Activated B cell treated with CpG ODN at 0.5 μM for 24 hours (primary cell): ENCODE measurements at regions of chr16 and their contacts with region 1.

Region 1: DNA sequence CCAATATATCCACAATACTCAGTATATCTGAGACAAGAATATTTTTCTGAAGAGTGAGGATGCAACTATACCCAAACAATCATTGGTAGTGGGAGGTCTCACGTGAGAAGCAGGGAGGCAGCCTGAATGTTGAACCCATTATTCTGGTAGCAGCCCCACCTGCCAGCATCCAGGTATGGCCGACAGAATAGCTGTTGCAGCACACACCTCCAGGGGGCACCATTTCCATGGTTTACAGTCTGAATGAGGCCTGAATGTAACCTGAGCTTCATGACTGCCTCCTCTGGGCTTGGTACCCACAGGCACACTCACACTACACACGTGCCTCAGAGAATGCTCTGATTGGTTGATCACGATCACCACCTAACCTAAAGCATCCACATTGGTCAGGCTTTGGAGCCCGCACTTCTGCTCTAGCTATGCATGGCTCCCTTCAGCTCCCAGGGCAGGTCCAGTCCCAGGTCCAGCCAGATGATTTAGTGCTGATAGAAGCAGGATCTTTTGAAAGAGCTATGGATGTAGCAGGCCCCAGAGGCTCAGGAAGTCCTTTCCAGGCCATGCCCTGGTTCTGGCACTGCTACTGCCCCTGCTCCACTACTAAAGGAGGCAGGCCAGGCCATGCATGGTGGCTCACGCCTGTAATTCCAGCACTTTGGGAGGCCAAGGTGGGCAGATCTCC is 11.0 kb upstream of the CBFB start:
- DNase-seq: peak; percentile 41
- ATAC-seq: peak; percentile 80
- H3K4me3 Mint-ChIP-seq: no peak overlapping the region
- H3K27ac Mint-ChIP-seq: no peak overlapping the region
- H3K4me1 Mint-ChIP-seq: peaks cover 4% of the 10 kb centered on the region
- H3K27me3 Mint-ChIP-seq: no peaks in the 10 kb centered on the region
- CTCF ChIP-seq: no peak

Region 2: DNA sequence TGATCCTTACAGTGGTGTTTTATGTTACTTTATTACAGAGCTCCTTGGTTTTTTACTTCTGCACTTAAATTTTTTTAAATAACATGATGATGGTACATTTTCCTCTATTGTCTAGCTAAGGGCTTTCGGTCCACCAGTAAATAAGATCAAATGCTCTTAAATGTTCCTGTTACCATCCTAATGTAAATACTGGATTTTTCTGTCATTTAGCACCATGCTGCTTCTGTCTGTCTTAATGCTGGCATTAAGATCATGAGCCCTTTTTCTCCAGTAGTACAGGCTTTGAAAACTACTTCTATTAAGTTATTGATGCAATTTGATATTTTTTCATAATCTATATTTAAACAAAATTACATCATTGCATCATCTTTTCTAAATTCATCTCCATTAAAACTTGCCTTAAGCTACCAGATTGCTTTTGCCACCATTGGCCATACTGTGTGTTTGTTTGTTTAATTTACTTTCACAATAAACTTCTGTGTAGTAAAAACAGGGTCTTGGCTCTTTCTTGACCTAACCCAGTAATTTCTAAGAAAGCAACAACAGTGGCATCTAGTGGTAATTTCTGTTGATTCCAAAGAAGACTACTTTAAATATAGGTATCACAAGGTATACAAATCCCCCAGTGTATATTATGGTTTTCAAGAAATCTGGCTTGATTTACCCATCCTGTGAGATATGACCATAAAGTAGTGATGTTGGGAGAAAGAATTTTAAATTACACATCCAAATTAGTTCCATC is 82.8 kb after region 1 on chr16:
- CTCF ChIA-PET with region 1: interaction called, 12 read pairs
- POLR2A ChIA-PET with region 1: no interaction called
- intact Hi-C with region 1: loop called (anchors 2 kb)
- DNase-seq: no peak
- ATAC-seq: no peak
- H3K4me3 Mint-ChIP-seq: no peak overlapping the region
- H3K27ac Mint-ChIP-seq: no peak overlapping the region
- H3K4me1 Mint-ChIP-seq: peaks cover 16% of the 10 kb centered on the region
- H3K27me3 Mint-ChIP-seq: no peaks in the 10 kb centered on the region
- CTCF ChIP-seq: no peak

Region 3: GRCh38 chr16:67183627-67184328 is 165.8 kb after region 1 on chr16 and contains the start of gene MATCAP1:
- CTCF ChIA-PET with region 1: interaction called, 9 read pairs
- POLR2A ChIA-PET with region 1: interaction called, 4 read pairs
- intact Hi-C with region 1: loop called (anchors 1 kb)
- DNase-seq: peak; percentile 94
- ATAC-seq: peak; percentile 96
- H3K4me3 Mint-ChIP-seq: peak within 1 kb of the TSS; percentile 85
- H3K27ac Mint-ChIP-seq: no peak within 1 kb of the TSS
- H3K4me1 Mint-ChIP-seq: peaks cover 14% of the 10 kb centered on the region
- H3K27me3 Mint-ChIP-seq: peaks cover 12% of the 10 kb centered on the region
- CTCF ChIP-seq: no peak
- total RNA-seq, gene MATCAP1: 10.6 and 18.7 TPM in 2 replicates